Astrocyte of the cerebellum (primary cell): ENCODE measurements at regions of chr5 and their contacts with region 1.

Region 1: DNA sequence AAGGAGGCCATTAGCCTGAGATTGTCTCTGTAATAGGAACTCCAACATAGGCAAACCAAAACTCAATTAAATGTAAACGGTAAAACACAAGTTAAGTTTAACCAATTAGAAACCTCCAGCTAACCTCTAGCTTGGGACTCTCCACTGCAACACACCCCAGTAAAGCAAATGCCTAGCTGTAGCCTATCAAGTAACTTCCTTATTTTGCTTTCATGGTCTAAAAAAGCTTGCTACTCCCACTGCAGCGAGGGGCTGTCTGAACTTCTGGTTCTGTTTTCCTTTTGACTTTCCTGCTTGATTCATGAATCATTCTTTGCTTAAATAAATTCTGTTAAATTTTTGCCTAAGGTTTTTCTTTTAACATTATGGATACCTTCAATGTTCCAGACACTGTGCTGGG is 24.4 kb upstream of the C5orf46 start:
- DNase-seq: no peak
- H3K4me3 ChIP-seq: no peak overlapping the region
- CTCF ChIP-seq: no peak

Region 2: GRCh38 chr5:147852365-147852764 is 78.4 kb before region 1 on chr5:
- in situ Hi-C with region 1: loop called (anchors 5 kb)
- DNase-seq: no peak
- H3K4me3 ChIP-seq: no peak overlapping the region
- CTCF ChIP-seq: no peak

Region 3: DNA sequence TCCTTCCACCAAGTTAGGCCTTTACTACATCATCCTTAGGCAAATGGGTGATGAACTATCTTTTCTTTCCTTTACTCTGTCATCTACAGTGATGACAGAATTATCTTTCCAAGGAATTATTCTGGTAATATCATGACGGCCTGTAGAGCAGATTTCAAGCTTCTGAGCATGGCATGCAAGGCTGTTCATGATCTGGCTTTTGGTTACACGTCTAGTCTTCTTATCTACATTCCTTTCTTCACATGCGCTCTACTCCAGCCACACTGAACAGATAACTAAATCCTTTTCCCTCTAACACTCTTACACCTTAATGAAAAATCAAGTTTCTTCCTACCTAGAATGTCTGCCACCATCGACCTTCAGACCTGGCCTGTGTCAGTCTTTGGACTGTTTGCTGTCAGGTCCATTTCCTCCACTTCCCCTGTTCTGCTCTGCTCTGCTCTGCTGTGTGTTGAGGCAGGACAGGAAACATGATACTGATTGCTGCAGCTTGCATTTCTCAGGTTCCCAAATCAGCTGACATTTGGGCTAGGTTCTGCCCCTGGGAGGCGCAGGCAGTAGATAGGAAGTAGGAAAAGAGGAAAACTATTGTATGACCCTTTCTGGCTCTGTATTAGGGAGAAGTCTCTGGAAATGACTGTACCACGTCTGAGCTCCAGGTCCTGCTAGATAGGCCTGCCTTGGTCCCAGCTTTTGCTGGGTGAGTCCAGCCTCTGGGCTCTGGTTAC is 48.0 kb before region 1 on chr5:
- in situ Hi-C with region 1: loop called (anchors 5 kb)
- DNase-seq: no peak
- H3K4me3 ChIP-seq: no peak overlapping the region
- CTCF ChIP-seq: no peak